Activated CD8-positive, alpha-beta T cell treated with anti-CD3 and anti-CD28 coated beads, Interleukin-2, amount 10 ng/mL, durations not matched to agents 7 days and 5 days (primary cell): ENCODE measurements at regions of chr1 and their contacts with region 1.

Region 1: GRCh38 chr1:167517535-167518330 is 596 bp downstream of the CD247 start:
- DNase-seq: peak; percentile 85
- ATAC-seq: peak; percentile 81
- H3K4me3 Mint-ChIP-seq: peak overlapping the region; percentile 93
- H3K27ac Mint-ChIP-seq: peak overlapping the region; percentile 98
- H3K4me1 Mint-ChIP-seq: peaks cover 50% of the 10 kb centered on the region
- H3K27me3 Mint-ChIP-seq: no peaks in the 10 kb centered on the region

Region 2: GRCh38 chr1:167401260-167401873 is 116.4 kb before region 1 on chr1:
- CTCF ChIA-PET with region 1: interaction called, 17 read pairs
- POLR2A ChIA-PET with region 1: no interaction called
- DNase-seq: peak; percentile 73
- ATAC-seq: peak; percentile 91
- H3K4me3 Mint-ChIP-seq: no peak overlapping the region
- H3K27ac Mint-ChIP-seq: no peak overlapping the region
- H3K4me1 Mint-ChIP-seq: peaks cover 8% of the 10 kb centered on the region
- H3K27me3 Mint-ChIP-seq: no peaks in the 10 kb centered on the region

Region 3: DNA sequence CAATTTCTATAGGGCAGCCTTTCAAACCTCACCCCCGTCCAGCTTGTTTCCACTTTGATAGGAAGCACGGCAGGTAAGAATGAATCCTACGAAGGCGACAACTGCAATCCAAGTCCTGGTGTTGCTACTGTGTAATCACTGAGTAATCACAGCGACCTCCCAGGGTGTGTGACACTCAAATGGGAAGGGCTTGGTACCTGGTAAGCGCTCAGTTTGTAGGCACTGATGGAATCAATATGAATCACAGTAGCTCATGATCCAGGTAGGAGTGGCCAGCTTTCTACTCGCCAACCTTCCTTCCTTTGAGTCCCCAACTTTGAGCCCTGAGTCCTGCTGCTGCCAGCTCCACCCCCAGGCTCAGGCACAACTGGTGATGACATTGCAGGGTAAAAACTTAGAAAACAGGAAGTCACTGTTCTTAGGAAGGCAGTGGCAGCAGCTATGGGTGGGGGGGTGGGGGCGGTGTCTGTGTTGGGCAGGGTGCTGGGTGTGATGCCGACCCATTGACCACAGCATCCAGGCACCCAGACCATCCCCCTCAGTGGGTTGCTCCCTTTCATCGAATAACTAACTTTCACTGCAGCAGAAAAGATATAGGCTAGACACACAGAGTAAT is 70.1 kb before region 1 on chr1:
- CTCF ChIA-PET with region 1: interaction called, 51 read pairs
- POLR2A ChIA-PET with region 1: interaction called, 37 read pairs
- DNase-seq: peak; percentile 83
- ATAC-seq: peak; percentile 75
- H3K4me3 Mint-ChIP-seq: peak overlapping the region; percentile 67
- H3K27ac Mint-ChIP-seq: peak overlapping the region; percentile 94
- H3K4me1 Mint-ChIP-seq: peaks cover 91% of the 10 kb centered on the region
- H3K27me3 Mint-ChIP-seq: no peaks in the 10 kb centered on the region

Region 4: DNA sequence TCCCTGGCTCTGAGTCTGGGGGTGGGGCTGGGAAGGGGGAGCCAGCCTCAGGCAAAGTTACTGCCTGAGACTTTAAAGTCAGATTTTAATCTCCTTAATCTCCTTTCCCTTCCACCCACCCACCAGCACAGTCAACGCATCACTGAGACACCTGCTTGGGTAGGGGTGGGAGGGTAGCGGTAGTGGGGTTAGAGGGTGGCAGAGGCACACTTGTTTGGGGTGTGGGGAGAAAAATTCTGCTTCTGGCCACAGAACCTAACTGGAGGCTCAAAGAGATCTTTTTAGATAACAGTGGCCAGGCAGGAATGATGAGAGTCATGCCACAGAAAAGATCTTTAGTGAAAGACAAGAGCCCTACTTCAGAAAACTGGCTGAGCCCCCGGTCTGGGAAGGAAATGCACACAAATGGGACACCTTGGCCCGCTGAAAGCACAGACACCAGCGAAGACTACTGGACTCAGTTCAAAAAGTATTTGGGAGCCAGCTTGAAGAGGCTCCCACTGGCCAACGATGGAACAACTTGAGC is 43.5 kb before region 1 on chr1:
- CTCF ChIA-PET with region 1: interaction called, 14 read pairs
- POLR2A ChIA-PET with region 1: interaction called, 7 read pairs
- DNase-seq: peak; percentile 52
- ATAC-seq: peak; percentile 77
- H3K4me3 Mint-ChIP-seq: peak overlapping the region; percentile 53
- H3K27ac Mint-ChIP-seq: peak overlapping the region; percentile 79
- H3K4me1 Mint-ChIP-seq: peaks cover 83% of the 10 kb centered on the region
- H3K27me3 Mint-ChIP-seq: no peaks in the 10 kb centered on the region

Region 5: DNA sequence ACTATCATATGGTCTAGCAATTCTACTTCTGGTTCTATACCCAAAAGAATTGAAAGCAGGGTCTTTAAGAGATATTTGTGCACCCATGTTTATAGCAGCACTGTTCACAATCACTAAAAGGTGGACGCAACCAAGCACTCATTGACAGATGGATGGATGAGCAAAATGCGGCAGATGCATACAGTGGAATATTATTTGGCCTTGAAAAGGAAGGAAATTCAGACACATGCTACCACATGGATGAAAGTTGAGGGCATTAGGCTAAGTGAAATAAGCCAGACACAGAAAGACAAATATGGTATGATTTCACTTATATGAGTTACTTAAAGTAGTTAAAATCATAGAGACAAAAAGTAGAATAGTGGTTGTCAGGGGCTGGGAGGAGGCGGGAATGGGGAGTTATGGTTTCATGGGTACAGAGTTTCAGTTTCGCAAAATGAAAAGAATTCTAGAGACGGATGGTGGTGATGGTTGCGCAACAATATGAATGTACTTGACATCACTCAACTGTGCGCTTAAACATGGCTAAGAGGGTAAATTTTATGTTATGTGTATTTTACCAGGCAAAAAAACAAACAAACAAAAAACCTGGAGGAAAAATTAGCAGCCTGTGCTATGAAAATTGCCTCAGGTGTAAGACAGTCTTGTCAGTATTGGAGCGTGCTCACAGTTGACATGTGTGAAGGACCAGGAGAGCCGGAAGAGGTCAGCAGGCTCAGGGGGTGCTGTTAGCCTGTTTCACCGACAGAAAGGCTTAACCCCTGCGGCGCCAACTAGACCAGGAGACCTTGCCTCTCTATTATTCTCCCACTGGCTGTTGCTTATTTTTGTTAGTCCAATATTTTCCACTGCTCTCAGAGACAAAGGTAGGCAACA is 25.9 kb before region 1 on chr1:
- CTCF ChIA-PET with region 1: interaction called, 12 read pairs
- POLR2A ChIA-PET with region 1: interaction called, 18 read pairs
- DNase-seq: peak; percentile 73
- ATAC-seq: peak; percentile 65
- H3K4me3 Mint-ChIP-seq: peak overlapping the region; percentile 77
- H3K27ac Mint-ChIP-seq: peak overlapping the region; percentile 94
- H3K4me1 Mint-ChIP-seq: peaks cover 92% of the 10 kb centered on the region
- H3K27me3 Mint-ChIP-seq: no peaks in the 10 kb centered on the region

Region 6: DNA sequence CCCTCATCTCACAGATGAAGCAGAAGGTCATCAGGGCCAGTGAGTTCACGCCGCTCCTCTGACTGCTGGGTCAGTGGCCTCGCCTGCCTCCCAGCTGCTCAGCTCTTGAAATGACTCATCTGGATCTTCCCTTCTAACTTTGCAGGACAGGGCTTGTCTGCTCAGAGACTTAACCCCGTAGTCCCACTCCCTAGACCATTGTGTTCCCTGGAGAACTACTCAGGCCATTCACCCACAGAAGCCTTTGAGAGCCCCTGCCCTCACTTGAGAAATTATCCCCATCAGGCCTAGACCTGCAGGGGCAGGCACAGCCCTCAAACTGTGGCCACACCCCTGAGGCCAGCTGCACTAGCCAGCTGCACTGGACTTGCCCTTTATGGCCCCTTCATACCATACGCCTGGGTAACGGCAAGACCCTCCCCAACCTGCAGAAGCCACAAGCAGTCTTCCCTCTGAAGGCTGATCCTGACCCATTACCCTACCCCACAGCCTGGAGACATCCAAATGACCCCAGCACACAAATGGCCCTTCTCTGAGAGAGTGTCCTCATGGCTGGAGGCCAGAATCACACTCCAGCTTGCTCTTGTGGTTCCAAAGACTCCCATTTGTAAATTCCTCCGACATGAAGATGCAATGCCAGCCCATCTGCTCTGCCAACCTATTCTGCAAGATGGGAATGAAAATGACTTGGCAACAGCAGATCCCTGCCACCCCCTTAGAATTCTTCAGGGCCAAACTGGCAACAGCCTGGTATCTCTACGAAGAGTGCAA is 145.5 kb after region 1 on chr1:
- CTCF ChIA-PET with region 1: no interaction called
- POLR2A ChIA-PET with region 1: no interaction called
- DNase-seq: no peak
- ATAC-seq: no peak
- H3K4me3 Mint-ChIP-seq: no peak overlapping the region
- H3K27ac Mint-ChIP-seq: peak overlapping the region; percentile 6
- H3K4me1 Mint-ChIP-seq: peaks cover 39% of the 10 kb centered on the region
- H3K27me3 Mint-ChIP-seq: no peaks in the 10 kb centered on the region